A673 (cell line): ENCODE measurements at regions of chr1 and their contacts with region 1.

Region 1: DNA sequence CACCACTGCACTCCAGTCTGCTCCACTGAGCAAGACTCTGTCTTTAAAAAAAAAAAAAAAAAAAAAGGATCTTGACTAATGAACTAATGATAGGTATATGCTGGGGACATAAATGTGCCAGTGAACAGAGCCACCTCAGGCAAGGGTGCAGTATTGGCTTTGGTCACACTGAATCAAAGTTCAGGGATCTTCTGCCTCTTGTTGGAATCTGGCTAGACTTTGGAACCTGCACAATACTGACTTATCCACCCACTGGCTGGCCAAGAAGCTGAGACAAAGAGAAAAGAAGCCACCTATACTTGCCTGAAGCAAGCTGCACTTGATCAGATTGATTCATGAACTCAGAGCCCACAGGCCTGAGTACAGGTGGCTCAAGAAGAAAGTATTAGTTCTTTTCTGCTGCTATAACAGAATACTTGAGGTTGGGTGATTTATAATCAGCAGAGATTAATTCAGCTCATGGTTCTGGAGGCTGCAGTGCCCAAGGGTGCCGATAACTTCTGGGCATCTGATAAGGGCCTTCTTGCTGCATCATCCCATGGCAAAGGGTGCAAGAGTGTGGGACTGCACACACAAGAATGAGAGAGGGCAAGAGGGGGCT is 172.0 kb downstream of the FGGY start:
- DNase-seq: no peak
- H3K4me3 ChIP-seq: no peak overlapping the region
- H3K27ac ChIP-seq: no peak overlapping the region
- H3K4me1 ChIP-seq: no peaks in the 10 kb centered on the region
- H3K27me3 ChIP-seq: no peaks in the 10 kb centered on the region
- CTCF ChIP-seq: no peak

Region 2: GRCh38 chr1:59408608-59409240 is 60.2 kb before region 1 on chr1:
- CTCF ChIA-PET with region 1: no interaction called
- POLR2A ChIA-PET with region 1: no interaction called
- intact Hi-C with region 1: loop called (anchors 10 kb)
- DNase-seq: no peak
- H3K4me3 ChIP-seq: no peak overlapping the region
- H3K27ac ChIP-seq: no peak overlapping the region
- H3K4me1 ChIP-seq: peaks cover 6% of the 10 kb centered on the region
- H3K27me3 ChIP-seq: no peaks in the 10 kb centered on the region
- CTCF ChIP-seq: no peak

Region 3: GRCh38 chr1:59718064-59718988 is 249.4 kb after region 1 on chr1:
- CTCF ChIA-PET with region 1: no interaction called
- POLR2A ChIA-PET with region 1: no interaction called
- intact Hi-C with region 1: no loop called
- DNase-seq: peak; percentile 68
- H3K4me3 ChIP-seq: no peak overlapping the region
- H3K27ac ChIP-seq: no peak overlapping the region
- H3K4me1 ChIP-seq: no peaks in the 10 kb centered on the region
- H3K27me3 ChIP-seq: no peaks in the 10 kb centered on the region
- CTCF ChIP-seq: peak; percentile 76